ENCODE measurements at regions of chr3 and their contacts with region 1.

Region 1: GRCh38 chr3:99023590-99024192 is 122.2 kb upstream of the DCBLD2 start:
- DNase-seq: peak; percentile 36
- H3K4me3 ChIP-seq: no peak overlapping the region
- H3K27ac ChIP-seq: no peak overlapping the region
- H3K4me1 ChIP-seq: no peaks in the 10 kb centered on the region
- H3K27me3 ChIP-seq: no peaks in the 10 kb centered on the region
- CTCF ChIP-seq: peak; percentile 81
- EP300 ChIP-seq: no peak
- RAD21 ChIP-seq: peak; percentile 85

Region 2: DNA sequence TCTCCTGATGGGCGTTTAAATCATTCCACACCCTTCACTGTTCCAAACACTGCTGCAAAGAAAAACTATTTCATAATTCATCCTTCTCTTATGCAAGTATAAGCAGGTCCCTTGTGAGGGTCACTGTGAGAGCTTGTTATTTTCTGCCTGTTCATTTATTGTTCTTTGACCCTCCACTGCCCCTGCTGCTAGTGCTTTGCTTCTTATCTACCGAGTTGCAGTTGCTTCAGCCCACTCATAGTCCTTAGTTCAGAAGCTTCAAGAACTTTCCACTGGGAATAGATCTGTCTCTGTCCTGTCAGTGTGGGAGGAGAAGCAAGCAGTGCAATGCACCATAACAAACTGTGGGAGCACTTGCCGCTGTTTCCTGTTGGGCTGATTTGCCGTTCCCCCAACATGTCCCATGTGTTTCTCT is 1091.3 kb before region 1 on chr3:
- CTCF ChIA-PET with region 1: no interaction called
- POLR2A ChIA-PET with region 1: no interaction called
- DNase-seq: no peak
- H3K4me3 ChIP-seq: no peak overlapping the region
- H3K27ac ChIP-seq: no peak overlapping the region
- H3K4me1 ChIP-seq: no peaks in the 10 kb centered on the region
- H3K27me3 ChIP-seq: no peaks in the 10 kb centered on the region
- CTCF ChIP-seq: no peak
- EP300 ChIP-seq: no peak
- RAD21 ChIP-seq: no peak

Region 3: DNA sequence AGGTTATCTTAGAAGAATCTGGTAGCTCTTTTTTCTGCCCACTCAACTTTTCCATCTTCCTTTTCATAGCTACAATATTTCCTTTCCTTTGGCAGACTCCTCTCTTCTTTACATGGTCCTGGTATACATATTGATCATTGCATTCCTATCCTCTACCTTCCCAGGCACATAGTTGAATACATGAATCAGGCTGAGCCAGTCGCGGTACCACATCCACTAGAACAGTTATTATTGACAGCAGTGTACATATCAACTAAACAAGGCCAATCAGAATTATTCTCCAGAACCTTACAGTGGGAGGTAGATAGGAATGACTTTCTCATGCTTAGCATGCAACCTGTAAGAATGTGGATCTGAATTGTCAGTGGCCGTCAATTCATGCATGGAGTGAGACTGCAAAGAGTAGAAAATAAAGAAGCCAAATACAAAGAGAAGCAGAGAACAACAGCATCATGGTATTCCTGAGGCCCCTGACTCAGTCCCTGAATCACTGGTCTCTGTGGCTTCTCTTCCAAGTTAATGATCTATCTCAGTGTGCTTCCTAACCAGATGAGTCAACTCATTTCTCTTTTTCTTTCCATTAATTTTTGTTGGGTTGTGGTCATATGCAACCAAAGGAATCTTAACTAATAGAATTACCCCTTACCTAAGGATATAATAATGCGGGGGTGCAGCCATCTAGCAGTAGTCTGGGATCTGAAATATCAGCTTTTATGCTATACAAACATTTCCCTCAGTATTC is 61.3 kb before region 1 on chr3:
- CTCF ChIA-PET with region 1: no interaction called
- POLR2A ChIA-PET with region 1: no interaction called
- DNase-seq: no peak
- H3K4me3 ChIP-seq: peak overlapping the region in 1 of 2 experiments; percentile 44; a peak in 2 of 4 replicates
- H3K27ac ChIP-seq: peak overlapping the region in 1 of 2 experiments; percentile 100; a peak in 3 of 4 replicates
- H3K4me1 ChIP-seq: peaks cover 22 to 36% of the 10 kb centered on the region in 2 experiments
- H3K27me3 ChIP-seq: no peaks in the 10 kb centered on the region
- CTCF ChIP-seq: no peak
- EP300 ChIP-seq: peak; percentile 37 to 98; a peak in 3 of 4 replicates
- RAD21 ChIP-seq: no peak

Region 4: DNA sequence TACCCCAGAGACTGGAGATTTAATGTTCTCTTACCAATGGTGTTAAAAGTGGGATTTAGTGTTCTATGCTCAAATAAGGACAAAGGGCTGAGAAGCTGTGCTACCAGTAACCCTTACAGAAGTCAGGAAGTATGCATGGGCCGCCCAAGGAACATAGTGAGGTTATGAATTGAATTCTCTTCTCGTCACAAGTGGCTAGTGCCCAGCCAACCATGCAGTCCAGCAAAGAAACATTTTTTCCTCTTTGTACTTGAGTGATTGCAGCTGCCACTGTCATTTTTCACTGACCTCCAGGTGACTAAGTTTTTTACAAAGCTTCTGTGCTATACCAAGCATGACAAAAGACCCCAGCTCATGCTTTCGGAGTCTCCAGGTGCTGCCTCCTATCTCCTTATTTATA is 11.6 kb before region 1 on chr3:
- CTCF ChIA-PET with region 1: interaction called, 10 read pairs
- POLR2A ChIA-PET with region 1: no interaction called
- DNase-seq: no peak
- H3K4me3 ChIP-seq: no peak overlapping the region
- H3K27ac ChIP-seq: peak overlapping the region in 1 of 2 experiments; percentile 36; a peak in 1 of 4 replicates
- H3K4me1 ChIP-seq: peaks cover 0 to 5% of the 10 kb centered on the region in 2 experiments; a peak in 2 of 4 replicates
- H3K27me3 ChIP-seq: no peaks in the 10 kb centered on the region
- CTCF ChIP-seq: no peak
- EP300 ChIP-seq: no peak
- RAD21 ChIP-seq: no peak